IMR-90 (cell line): ENCODE measurements at regions of chr4 and their contacts with region 1.

Region 1: DNA sequence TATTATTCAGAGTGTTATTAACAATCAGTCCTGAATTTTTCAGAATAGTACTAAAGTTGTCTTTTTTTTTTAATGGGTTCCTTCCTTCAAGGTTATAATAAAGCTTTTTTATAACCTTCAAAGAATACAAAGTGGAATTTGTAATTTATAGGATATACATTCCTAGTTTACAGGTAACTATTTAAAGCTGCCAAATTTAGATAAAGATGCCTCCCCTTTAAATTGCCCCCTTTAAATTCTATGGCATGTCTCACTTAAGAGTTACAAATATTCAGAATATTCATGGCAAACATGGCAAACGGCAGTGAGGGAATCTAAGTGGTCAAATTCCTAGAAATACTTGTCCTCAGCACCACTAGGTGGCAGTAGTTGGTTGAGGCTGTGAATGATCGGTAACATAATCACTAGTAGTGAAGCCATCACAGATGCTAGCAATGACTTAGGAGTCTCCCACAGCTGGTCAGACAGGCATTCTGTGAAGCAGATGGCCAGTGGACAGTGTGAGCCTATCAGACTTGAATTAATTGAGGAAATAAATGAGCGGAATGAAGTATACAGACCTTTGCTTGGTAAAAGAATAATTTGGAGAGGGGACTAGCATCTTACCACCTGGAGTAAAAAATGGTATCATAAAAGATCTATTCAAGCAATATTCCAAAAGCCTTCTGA is 86.4 kb downstream of the CBR4 start:
- DNase-seq: peak; percentile 86
- ATAC-seq: peak; percentile 75
- H3K4me3 ChIP-seq: no peak overlapping the region
- H3K27ac ChIP-seq: no peak overlapping the region
- H3K4me1 ChIP-seq: peaks cover 2% of the 10 kb centered on the region; the same call in 1 of the 2 replicates
- H3K27me3 ChIP-seq: no peaks in the 10 kb centered on the region
- CTCF ChIP-seq: peak; percentile 72
- POLR2A ChIP-seq: no peak
- RAD21 ChIP-seq: peak; percentile 76

Region 2: DNA sequence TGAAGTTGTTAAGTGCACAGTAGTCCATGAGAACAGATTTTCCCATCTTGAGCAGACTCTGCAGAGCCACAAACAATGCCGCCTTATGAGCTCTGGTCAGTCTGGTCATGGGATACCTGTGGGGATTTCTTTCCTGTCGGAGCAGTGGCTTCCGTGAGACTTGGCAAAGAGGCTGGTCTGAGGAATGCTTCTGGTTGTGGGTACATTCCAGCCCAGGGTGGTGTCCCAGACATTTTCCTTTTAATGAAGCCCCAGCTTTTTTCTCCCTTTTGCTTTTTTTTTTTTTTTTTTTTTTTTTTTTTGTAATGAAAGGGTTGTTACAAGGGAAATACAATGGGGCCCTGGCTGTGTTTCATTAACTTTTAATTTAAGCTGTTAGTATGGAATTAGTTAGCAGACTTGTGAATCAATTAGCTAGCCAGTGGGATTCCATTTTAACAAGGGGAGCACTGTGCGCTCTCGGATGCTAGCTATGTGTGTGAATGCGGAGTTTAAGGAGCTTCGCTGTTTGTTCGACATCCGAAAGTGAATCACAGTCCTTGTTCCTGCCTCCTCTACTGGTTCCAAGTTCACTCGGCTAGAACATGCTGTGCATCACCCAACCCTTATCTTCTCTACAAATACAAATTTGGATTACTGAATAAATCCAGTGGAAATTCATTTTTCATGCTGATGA is 138.7 kb before region 1 on chr4:
- CTCF ChIA-PET with region 1: no interaction called
- POLR2A ChIA-PET with region 1: interaction called, 12 read pairs
- dilution Hi-C with region 1: no loop called
- in situ Hi-C with region 1: no loop called
- intact Hi-C with region 1: no loop called
- DNase-seq: no peak
- ATAC-seq: no peak
- H3K4me3 ChIP-seq: no peak overlapping the region
- H3K27ac ChIP-seq: no peak overlapping the region
- H3K4me1 ChIP-seq: no peaks in the 10 kb centered on the region
- H3K27me3 ChIP-seq: no peaks in the 10 kb centered on the region
- CTCF ChIP-seq: no peak
- POLR2A ChIP-seq: no peak
- RAD21 ChIP-seq: no peak

Region 3: DNA sequence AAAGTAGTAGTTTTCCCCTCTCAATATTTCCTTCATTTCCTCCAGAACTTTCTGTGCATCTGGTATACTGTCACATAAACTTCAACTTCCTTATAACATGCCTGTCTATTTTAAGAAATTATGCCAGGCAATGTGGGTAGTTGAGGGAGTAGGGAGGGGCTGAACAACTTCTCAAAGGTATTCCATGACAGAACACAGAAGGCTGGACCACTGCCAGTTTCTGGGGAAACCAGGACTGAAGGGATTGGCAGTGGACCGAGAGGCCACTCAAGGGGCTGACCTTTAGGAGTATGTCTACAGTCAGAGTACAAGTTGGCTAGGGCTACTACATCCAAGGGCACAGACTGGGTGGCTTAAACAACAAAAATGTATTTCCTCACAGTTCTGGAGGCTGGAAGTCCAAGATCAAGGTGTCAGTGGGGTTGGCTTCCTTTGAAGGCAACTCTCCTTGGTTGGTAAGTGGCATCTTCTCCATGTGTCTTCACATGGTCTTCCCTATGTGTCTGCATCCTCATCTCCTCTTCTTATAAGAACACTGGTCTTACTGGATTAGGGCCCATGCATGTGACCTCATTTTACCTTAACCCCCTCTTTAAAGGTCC is 340.2 kb after region 1 on chr4:
- CTCF ChIA-PET with region 1: no interaction called
- POLR2A ChIA-PET with region 1: no interaction called
- dilution Hi-C with region 1: no loop called
- in situ Hi-C with region 1: no loop called
- intact Hi-C with region 1: no loop called
- DNase-seq: no peak
- ATAC-seq: no peak
- H3K4me3 ChIP-seq: no peak overlapping the region
- H3K27ac ChIP-seq: no peak overlapping the region
- H3K4me1 ChIP-seq: peaks cover 14% of the 10 kb centered on the region
- H3K27me3 ChIP-seq: no peaks in the 10 kb centered on the region
- CTCF ChIP-seq: no peak
- POLR2A ChIP-seq: no peak
- RAD21 ChIP-seq: no peak

Region 4: DNA sequence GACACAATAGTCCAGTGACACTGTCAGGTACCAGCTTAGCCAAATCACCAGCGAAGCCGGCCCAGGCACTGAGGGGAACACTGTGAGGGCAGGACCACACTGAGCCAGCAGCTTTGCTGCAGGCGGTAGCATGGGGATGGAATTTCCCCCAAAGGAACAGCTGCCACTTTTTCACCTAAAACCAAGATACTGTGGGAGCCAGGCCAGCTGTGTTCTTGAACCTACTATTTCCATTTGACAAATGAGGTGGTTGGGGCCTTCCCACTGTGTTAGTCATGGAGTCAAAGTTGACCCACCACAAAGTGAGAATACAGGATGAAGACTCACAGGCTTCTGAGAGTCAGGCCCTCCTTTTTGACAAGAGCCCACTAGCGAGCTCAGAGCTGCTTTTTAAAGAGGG is 417.8 kb after region 1 on chr4:
- CTCF ChIA-PET with region 1: interaction called, 11 read pairs
- POLR2A ChIA-PET with region 1: no interaction called
- dilution Hi-C with region 1: no loop called
- in situ Hi-C with region 1: no loop called
- intact Hi-C with region 1: no loop called
- DNase-seq: peak; percentile 97
- ATAC-seq: peak; percentile 35
- H3K4me3 ChIP-seq: no peak overlapping the region
- H3K27ac ChIP-seq: no peak overlapping the region
- H3K4me1 ChIP-seq: peaks cover 25% of the 10 kb centered on the region
- H3K27me3 ChIP-seq: no peaks in the 10 kb centered on the region
- CTCF ChIP-seq: no peak
- POLR2A ChIP-seq: no peak
- RAD21 ChIP-seq: no peak

Region 5: DNA sequence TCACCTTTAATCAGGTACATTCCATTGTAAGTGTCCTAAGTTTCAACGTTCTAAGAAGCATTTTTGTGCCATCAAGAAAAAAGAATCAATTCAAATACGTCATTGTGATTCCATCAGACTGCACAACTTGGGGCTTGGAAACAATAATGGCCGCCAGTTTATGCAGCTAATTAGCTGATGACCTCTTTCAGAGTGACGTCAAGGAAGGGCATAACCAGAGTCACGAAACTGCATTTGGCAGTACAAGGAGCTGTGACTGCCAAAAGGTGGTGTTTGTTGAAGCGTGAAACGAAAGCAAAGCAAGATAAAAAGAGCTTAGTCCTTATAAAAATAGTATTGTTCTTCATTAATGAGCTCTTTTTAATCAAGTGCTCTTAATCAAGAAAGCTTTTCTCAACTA is 428.2 kb after region 1 on chr4:
- CTCF ChIA-PET with region 1: no interaction called
- POLR2A ChIA-PET with region 1: no interaction called
- dilution Hi-C with region 1: no loop called
- in situ Hi-C with region 1: no loop called
- intact Hi-C with region 1: no loop called
- DNase-seq: peak; percentile 66
- ATAC-seq: no peak
- H3K4me3 ChIP-seq: no peak overlapping the region
- H3K27ac ChIP-seq: no peak overlapping the region
- H3K4me1 ChIP-seq: no peaks in the 10 kb centered on the region
- H3K27me3 ChIP-seq: no peaks in the 10 kb centered on the region
- CTCF ChIP-seq: no peak
- POLR2A ChIP-seq: no peak
- RAD21 ChIP-seq: no peak

Region 6: GRCh38 chr4:169492438-169493163 is 568.9 kb after region 1 on chr4:
- CTCF ChIA-PET with region 1: interaction called, 7 read pairs
- POLR2A ChIA-PET with region 1: no interaction called
- dilution Hi-C with region 1: no loop called
- in situ Hi-C with region 1: loop called (anchors 5 kb)
- intact Hi-C with region 1: loop called (anchors 1 kb)
- DNase-seq: peak; percentile 44
- ATAC-seq: peak; percentile 96
- H3K4me3 ChIP-seq: no peak overlapping the region
- H3K27ac ChIP-seq: no peak overlapping the region
- H3K4me1 ChIP-seq: no peaks in the 10 kb centered on the region
- H3K27me3 ChIP-seq: no peaks in the 10 kb centered on the region
- CTCF ChIP-seq: peak; percentile 81
- POLR2A ChIP-seq: no peak
- RAD21 ChIP-seq: peak; percentile 83